ENCODE measurements at regions of chr3 and their contacts with region 1.

Region 1: DNA sequence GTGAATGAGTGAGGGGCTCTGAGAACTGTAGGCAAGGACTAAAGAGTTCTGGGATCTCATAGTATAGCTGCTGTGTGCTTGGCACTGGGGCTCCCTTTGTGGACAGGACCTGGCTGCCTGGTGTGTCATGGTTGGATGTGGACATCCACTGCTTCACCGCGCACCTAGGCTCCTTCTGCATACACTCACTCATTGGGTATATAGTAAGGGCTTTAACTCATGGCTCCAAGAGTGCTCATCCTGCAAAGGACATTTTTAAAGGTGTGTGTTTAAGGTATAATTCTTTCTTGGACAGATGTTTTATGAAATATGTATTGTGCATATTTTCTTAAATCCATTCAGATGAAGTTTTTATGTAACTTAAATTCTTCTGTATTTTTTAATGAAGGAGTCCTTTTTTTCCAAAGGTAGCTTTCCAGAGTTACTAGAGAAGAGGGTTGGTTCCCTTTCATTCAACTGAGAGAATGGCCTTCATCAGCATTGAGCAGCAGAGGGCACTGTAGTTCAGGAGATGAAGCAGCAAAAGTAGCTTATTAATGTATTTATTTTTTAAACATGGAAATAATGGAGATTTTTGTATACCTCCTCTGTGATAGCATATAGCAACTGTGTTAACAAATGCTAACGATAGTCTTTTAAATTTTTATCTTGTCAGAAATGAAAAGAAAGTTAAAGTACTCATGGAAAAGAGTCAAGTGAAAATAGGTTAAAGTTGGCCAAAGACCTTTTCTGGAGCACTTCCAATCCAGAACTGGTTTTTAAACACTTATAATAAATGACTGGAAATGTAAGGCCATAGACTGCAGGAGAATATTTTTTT is 25.2 kb downstream of the OXNAD1 start:
- DNase-seq: no peak
- H3K4me3 ChIP-seq: no peak overlapping the region
- H3K27ac ChIP-seq: no peak overlapping the region
- H3K4me1 ChIP-seq: no peaks in the 10 kb centered on the region
- H3K27me3 ChIP-seq: no peaks in the 10 kb centered on the region
- CTCF ChIP-seq: peak; percentile 13 to 80 (median 65)
- POLR2A ChIP-seq: no peak

Region 2: GRCh38 chr3:16404349-16404895 is 114.2 kb after region 1 on chr3:
- intact Hi-C with region 1: no loop called
- DNase-seq: no peak
- H3K4me3 ChIP-seq: no peak overlapping the region
- H3K27ac ChIP-seq: no peak overlapping the region
- H3K4me1 ChIP-seq: no peaks in the 10 kb centered on the region
- H3K27me3 ChIP-seq: no peaks in the 10 kb centered on the region
- CTCF ChIP-seq: no peak
- POLR2A ChIP-seq: no peak

Region 3: GRCh38 chr3:16419640-16420241 is 129.5 kb after region 1 on chr3:
- intact Hi-C with region 1: loop called (anchors 10 kb)
- DNase-seq: no peak
- H3K4me3 ChIP-seq: no peak overlapping the region
- H3K27ac ChIP-seq: no peak overlapping the region
- H3K4me1 ChIP-seq: no peaks in the 10 kb centered on the region
- H3K27me3 ChIP-seq: no peaks in the 10 kb centered on the region
- CTCF ChIP-seq: no peak
- POLR2A ChIP-seq: no peak

Region 4: DNA sequence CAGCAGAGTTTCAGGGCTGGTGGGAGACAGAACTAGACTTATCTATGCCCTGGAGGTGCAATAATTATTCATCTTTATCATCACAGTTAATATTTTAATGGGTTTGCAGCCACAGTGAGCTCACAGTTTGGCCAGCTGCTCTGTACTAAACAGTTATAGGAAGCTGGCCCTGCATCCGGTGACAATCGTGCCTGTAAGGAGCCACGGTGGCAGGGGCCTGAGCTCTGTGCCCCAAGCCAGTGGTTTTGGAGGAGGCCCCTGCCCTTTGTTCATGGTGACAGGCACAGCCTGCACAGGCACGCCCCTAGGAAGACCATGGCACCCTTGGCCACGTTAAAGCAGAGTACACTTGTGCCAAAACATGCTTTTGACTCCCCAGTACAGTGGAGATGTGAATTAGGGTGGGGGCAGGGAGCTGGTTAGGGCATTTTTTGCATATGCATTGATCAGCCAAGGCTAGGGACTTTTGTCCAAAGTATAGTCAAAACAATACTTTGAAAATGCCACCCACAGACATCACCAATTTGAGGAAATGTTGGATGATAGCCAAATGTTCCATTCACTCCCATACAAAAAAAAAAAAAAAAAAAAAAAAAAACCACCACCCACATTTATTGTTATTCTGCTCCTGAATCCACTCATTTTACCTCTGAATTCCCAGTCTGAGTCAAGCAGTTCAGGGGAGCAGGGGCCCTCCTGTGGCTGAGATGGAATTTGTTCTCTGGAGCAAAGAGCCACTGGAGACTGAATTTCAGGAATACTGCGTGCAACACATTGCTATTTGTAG is 226.7 kb after region 1 on chr3:
- intact Hi-C with region 1: loop called (anchors 2 kb)
- DNase-seq: no peak
- H3K4me3 ChIP-seq: no peak overlapping the region
- H3K27ac ChIP-seq: no peak overlapping the region
- H3K4me1 ChIP-seq: no peaks in the 10 kb centered on the region
- H3K27me3 ChIP-seq: peaks cover 4% of the 10 kb centered on the region
- CTCF ChIP-seq: peak in 1 of 4 experiments; percentile 39
- POLR2A ChIP-seq: no peak

Region 5: GRCh38 chr3:16550676-16551341 is 260.6 kb after region 1 on chr3:
- intact Hi-C with region 1: loop called (anchors 2 kb)
- DNase-seq: peak; percentile 58
- H3K4me3 ChIP-seq: no peak overlapping the region
- H3K27ac ChIP-seq: no peak overlapping the region
- H3K4me1 ChIP-seq: no peaks in the 10 kb centered on the region
- H3K27me3 ChIP-seq: no peaks in the 10 kb centered on the region
- CTCF ChIP-seq: peak; percentile 41 to 88 (median 82)
- POLR2A ChIP-seq: no peak